SK-N-SH (cell line): ENCODE measurements at regions of chr9 and their contacts with region 1.

Region 1: GRCh38 chr9:95515272-95516113 is 1.3 kb downstream of the PTCH1 start:
- DNase-seq: peak; percentile 82
- H3K4me3 ChIP-seq: peak overlapping the region; percentile 54 to 63; a peak in 3 of 4 replicates
- H3K27ac ChIP-seq: peak overlapping the region in 1 of 2 experiments; percentile 39; a peak in 1 of 4 replicates
- H3K4me1 ChIP-seq: peaks cover 11 to 25% of the 10 kb centered on the region in 2 experiments; a peak in 3 of 4 replicates
- H3K27me3 ChIP-seq: 0 out of 2 replicates have a peak, but pooled peaks cover 7% of the 10 kb centered on the region
- CTCF ChIP-seq: no peak
- EP300 ChIP-seq: no peak
- RAD21 ChIP-seq: no peak

Region 2: DNA sequence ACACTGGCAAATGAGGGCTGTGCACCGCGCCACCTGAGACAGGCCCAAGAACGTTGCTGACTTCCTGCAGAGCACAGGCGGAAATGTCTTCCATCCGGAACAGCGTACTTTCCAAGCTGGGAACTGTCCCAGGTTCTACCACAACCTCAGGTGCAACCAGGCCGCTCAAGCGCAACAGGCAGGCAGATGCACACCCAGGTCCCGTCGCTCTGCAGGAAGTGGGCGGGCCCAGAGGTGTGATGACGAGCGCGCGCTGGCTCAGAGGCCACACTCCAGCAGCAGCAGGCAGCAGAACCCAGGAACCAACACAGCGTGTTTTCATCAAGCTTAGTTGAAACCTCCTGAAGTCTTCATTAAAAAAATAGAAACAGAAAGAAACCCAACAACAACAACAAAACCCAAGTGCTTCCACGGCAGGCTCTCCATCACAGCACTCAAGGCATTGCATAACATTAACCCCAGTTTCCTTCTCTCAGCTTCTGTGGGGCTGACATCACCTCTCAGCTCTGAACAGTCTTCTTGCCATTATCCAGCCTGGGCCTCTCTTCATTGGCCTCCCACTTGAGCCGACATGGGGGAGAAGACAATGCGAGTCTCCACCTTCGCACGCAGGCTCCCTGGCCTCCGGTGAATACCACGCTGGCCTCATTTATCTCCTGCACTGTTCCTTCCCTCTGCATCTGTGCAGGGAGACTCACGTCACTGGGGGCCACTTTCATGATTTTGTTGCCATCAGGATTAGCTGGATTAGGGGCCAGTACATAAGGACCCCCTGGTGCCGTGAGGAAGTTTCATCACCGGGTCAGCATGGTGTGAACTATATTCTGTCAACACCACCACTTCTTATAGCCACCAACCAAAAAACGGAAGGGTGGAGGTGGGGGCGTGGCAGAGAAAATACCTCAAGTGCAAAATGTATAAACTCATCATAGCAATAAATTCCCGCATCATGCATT is 20.8 kb before region 1 on chr9:
- CTCF ChIA-PET with region 1: no interaction called
- POLR2A ChIA-PET with region 1: no interaction called
- DNase-seq: peak; percentile 69
- H3K4me3 ChIP-seq: peak overlapping the region; percentile 48 to 57
- H3K27ac ChIP-seq: peak overlapping the region; percentile 10 to 96; a peak in 3 of 4 replicates
- H3K4me1 ChIP-seq: peaks cover 25 to 48% of the 10 kb centered on the region in 2 experiments; a peak in 3 of 4 replicates
- H3K27me3 ChIP-seq: no peaks in the 10 kb centered on the region
- CTCF ChIP-seq: no peak
- EP300 ChIP-seq: no peak
- RAD21 ChIP-seq: 0 out of 2 replicates have a peak, but pooled peaks have one; percentile 2

Region 3: GRCh38 chr9:95875305-95876137 is 360.0 kb after region 1 on chr9 and contains the start of gene ERCC6L2:
- CTCF ChIA-PET with region 1: interaction called, 3 read pairs
- POLR2A ChIA-PET with region 1: interaction called, 10 read pairs
- DNase-seq: peak; percentile 92
- H3K4me3 ChIP-seq: no peak within 1 kb of the TSS
- H3K27ac ChIP-seq: no peak within 1 kb of the TSS; a peak in 1 of 4 replicates
- H3K4me1 ChIP-seq: peaks cover 6 to 8% of the 10 kb centered on the region in 2 experiments; a peak in 3 of 4 replicates
- H3K27me3 ChIP-seq: no peaks in the 10 kb centered on the region
- CTCF ChIP-seq: no peak
- EP300 ChIP-seq: no peak
- RAD21 ChIP-seq: peak; percentile 32
- polyA plus RNA-seq, gene ERCC6L2: 10.0 and 13.8 TPM in 2 replicates

Region 4: GRCh38 chr9:96587338-96588315 is 1072.1 kb after region 1 on chr9:
- CTCF ChIA-PET with region 1: no interaction called
- POLR2A ChIA-PET with region 1: no interaction called
- DNase-seq: no peak
- H3K4me3 ChIP-seq: no peak overlapping the region
- H3K27ac ChIP-seq: no peak overlapping the region
- H3K4me1 ChIP-seq: peaks cover 0 to 3% of the 10 kb centered on the region in 2 experiments; a peak in 1 of 4 replicates
- H3K27me3 ChIP-seq: no peaks in the 10 kb centered on the region
- CTCF ChIP-seq: no peak
- EP300 ChIP-seq: no peak
- RAD21 ChIP-seq: no peak